ENCODE measurements at regions of chr7 and their contacts with region 1.

Region 1: DNA sequence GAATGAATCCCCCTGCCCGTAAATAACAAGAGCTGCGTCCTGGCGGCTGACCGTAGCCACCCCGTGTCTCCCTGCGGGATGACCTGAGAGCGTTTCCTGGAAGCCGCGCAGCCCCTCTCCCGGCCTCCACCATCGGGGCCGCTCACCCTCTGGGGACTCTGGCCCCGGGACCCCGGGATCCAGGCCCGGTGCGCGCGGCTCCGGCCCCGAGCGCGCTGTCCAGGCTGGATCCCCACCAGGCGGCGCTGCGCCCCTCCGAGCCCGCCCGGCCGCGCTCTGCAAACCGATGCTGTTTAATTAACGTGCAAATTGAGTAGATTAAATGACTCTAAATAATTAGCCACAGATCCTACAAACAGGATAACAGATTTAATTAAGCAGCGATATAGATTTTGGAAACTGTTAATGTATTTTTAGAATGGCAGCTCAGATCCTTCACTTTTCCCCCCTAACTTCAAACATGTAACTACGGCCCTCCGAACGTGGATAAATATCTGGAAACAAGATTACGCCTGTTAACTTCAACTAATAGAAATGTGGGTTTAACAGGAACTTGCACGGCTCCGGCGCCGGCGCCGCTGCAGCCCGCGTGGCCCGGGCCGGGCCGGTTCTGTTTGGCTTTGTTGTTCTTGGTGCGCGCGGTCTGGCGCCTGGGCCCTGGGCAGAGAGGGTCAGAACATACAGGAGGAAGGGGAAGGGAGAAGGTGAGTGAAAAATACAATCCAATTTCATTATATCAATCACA is 7.1 kb upstream of the UNCX start:
- DNase-seq: peak in 2 of 6 donors; percentile 52 to 78
- ATAC-seq: peak in 3 of 4 donors; percentile 52 to 77 (median 72)
- H3K4me3 ChIP-seq: no peak overlapping the region
- H3K27ac ChIP-seq: no peak overlapping the region
- H3K4me1 ChIP-seq: no peaks in the 10 kb centered on the region
- H3K27me3 ChIP-seq: peaks cover 0 to 67% (median 24%) of the 10 kb centered on the region in 4 donors
- CTCF ChIP-seq: peak; percentile 22 to 75 (median 66)

Region 2: GRCh38 chr7:1403638-1404459 is 178.2 kb after region 1 on chr7:
- intact Hi-C with region 1: loop called in 1 of 3 experiments (anchors 10 kb)
- DNase-seq: no peak
- ATAC-seq: peak in 2 of 4 donors; percentile 16 to 20
- H3K4me3 ChIP-seq: no peak overlapping the region
- H3K27ac ChIP-seq: no peak overlapping the region
- H3K4me1 ChIP-seq: no peaks in the 10 kb centered on the region
- H3K27me3 ChIP-seq: peaks cover 0 to 28% (median 4%) of the 10 kb centered on the region in 4 donors
- CTCF ChIP-seq: no peak

Measured in pancreas (tissue), 10 donors.